AG04449 (cell line): ENCODE measurements at regions of chr4 and their contacts with region 1.

Region 1: GRCh38 chr4:106898621-106899230 is 137.4 kb downstream of the DKK2 start:
- DNase-seq: peak; percentile 14
- H3K4me3 ChIP-seq: no peak overlapping the region
- CTCF ChIP-seq: peak; percentile 62

Region 2: GRCh38 chr4:106266201-106266600 is 632.5 kb before region 1 on chr4:
- CTCF ChIA-PET with region 1: interaction called, 12 read pairs
- POLR2A ChIA-PET with region 1: no interaction called
- DNase-seq: peak; percentile 17
- H3K4me3 ChIP-seq: no peak overlapping the region
- CTCF ChIP-seq: peak; percentile 51

Region 3: GRCh38 chr4:106818764-106819163 is 80.0 kb before region 1 on chr4:
- CTCF ChIA-PET with region 1: interaction called, 15 read pairs
- POLR2A ChIA-PET with region 1: no interaction called
- DNase-seq: no peak
- H3K4me3 ChIP-seq: no peak overlapping the region
- CTCF ChIP-seq: no peak